ENCODE measurements at regions of chr1 and their contacts with region 1.

Region 1: GRCh38 chr1:224851210-224851847 is 78.1 kb upstream of the DNAH14 start:
- DNase-seq: no peak
- H3K4me3 ChIP-seq: no peak overlapping the region
- H3K27ac ChIP-seq: no peak overlapping the region
- H3K4me1 ChIP-seq: no peaks in the 10 kb centered on the region
- H3K27me3 ChIP-seq: no peaks in the 10 kb centered on the region
- CTCF ChIP-seq: peak; percentile 36 to 53 (median 40)
- EP300 ChIP-seq: no peak
- POLR2A ChIP-seq: no peak

Region 2: DNA sequence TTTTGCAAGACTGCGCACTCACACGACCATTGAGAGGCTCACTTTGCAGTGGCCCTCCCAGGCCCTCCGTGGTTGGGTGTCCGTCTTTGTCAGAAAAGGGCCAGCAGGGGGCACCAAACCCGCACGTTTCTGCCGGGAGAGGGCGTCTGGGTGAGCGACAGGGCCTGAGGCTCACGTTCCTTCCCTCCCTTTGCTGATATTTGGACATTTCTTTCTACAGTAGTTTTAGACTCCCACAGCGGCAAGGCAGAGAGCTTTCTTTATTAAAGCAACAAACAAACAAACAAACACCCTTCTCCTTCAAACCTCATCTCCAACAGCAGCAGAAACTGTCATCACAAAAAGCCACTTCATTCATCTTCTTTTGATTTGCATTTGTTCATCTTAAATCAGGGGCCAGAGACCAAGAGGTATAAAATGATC is 337.5 kb before region 1 on chr1:
- intact Hi-C with region 1: loop called (anchors 2 kb)
- DNase-seq: peak; percentile 95
- H3K4me3 ChIP-seq: no peak overlapping the region
- H3K27ac ChIP-seq: no peak overlapping the region
- H3K4me1 ChIP-seq: peaks cover 0 to 23% (median 15%) of the 10 kb centered on the region in 4 donors
- H3K27me3 ChIP-seq: no peaks in the 10 kb centered on the region
- CTCF ChIP-seq: peak; percentile 84 to 87 (median 84)
- EP300 ChIP-seq: no peak
- POLR2A ChIP-seq: no peak

Region 3: DNA sequence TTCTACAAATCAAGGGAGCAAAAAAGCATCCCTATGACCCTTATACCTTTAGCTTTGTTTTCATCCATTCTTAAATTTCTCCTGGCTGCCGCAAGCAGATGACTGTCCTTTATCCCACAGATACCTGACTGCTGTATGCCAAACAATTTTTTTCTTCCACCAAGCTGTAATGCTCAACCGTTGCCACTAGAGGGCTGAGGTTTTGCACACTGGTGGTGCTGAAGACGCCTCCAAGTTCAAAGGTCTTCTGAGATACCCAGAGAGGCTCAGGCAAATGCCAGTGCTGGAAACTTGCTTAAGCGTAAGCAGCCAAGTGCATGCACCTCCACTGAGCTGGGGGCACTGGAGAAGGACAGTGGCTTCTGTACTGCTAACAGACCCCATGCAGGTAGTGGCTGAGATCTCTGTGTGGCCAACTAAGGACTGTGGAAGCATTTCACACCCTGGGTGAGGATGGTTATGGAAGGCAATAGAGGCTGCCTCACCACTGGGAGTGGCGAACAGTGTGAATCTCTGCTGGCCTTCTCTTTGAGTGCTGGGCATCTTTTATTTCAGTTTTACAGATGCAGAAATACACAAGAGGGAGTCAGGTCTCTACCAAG is 206.7 kb before region 1 on chr1:
- intact Hi-C with region 1: loop called (anchors 2 kb)
- DNase-seq: no peak
- H3K4me3 ChIP-seq: no peak overlapping the region
- H3K27ac ChIP-seq: no peak overlapping the region
- H3K4me1 ChIP-seq: no peaks in the 10 kb centered on the region
- H3K27me3 ChIP-seq: no peaks in the 10 kb centered on the region
- CTCF ChIP-seq: peak; percentile 72 to 92 (median 75)
- EP300 ChIP-seq: no peak
- POLR2A ChIP-seq: no peak

Measured in esophagus muscularis mucosa (tissue), 4 donors.